Activated CD4-positive, alpha-beta memory T cell treated with anti-CD3 and anti-CD28 coated beads for 36 hours (primary cell): ENCODE measurements at regions of chr3 and their contacts with region 1.

Region 1: GRCh38 chr3:63911873-63912767 is at the start of gene SCAANT1:
- DNase-seq: peak; percentile 85
- H3K4me3 Mint-ChIP-seq: peak within 1 kb of the TSS; percentile 90
- H3K27ac Mint-ChIP-seq: peak within 1 kb of the TSS; percentile 93
- H3K4me1 Mint-ChIP-seq: peaks cover 41% of the 10 kb centered on the region
- H3K27me3 Mint-ChIP-seq: no peaks in the 10 kb centered on the region
- total RNA-seq, gene SCAANT1: not detected

Region 2: GRCh38 chr3:63863148-63864007 is 48.7 kb before region 1 on chr3 and contains the starts of genes ATXN7 and THOC7:
- CTCF ChIA-PET with region 1: interaction called, 3 read pairs
- POLR2A ChIA-PET with region 1: interaction called, 10 read pairs
- intact Hi-C with region 1: loop called (anchors 1 kb)
- DNase-seq: peak; percentile 70
- H3K4me3 Mint-ChIP-seq: peak within 1 kb of the TSS; percentile 92
- H3K27ac Mint-ChIP-seq: peak within 1 kb of the TSS; percentile 93
- H3K4me1 Mint-ChIP-seq: peaks cover 43% of the 10 kb centered on the region
- H3K27me3 Mint-ChIP-seq: no peaks in the 10 kb centered on the region
- total RNA-seq, gene ATXN7: 26.3 to 29.4 TPM
- total RNA-seq, gene THOC7: 85.2 to 88.9 TPM

Region 3: GRCh38 chr3:63900459-63900858 is 11.7 kb before region 1 on chr3:
- CTCF ChIA-PET with region 1: interaction called, 4 read pairs
- POLR2A ChIA-PET with region 1: interaction called, 4 read pairs
- intact Hi-C with region 1: loop called (anchors 1 kb)
- DNase-seq: no peak
- H3K4me3 Mint-ChIP-seq: no peak overlapping the region
- H3K27ac Mint-ChIP-seq: peak overlapping the region; percentile 2
- H3K4me1 Mint-ChIP-seq: peaks cover 38% of the 10 kb centered on the region
- H3K27me3 Mint-ChIP-seq: no peaks in the 10 kb centered on the region

Region 4: GRCh38 chr3:63933459-63933858 is 21.3 kb after region 1 on chr3:
- CTCF ChIA-PET with region 1: no interaction called
- POLR2A ChIA-PET with region 1: no interaction called
- intact Hi-C with region 1: loop called (anchors 2 kb)
- DNase-seq: no peak
- H3K4me3 Mint-ChIP-seq: no peak overlapping the region
- H3K27ac Mint-ChIP-seq: peak overlapping the region; percentile 71
- H3K4me1 Mint-ChIP-seq: peaks cover 76% of the 10 kb centered on the region
- H3K27me3 Mint-ChIP-seq: no peaks in the 10 kb centered on the region

Region 5: DNA sequence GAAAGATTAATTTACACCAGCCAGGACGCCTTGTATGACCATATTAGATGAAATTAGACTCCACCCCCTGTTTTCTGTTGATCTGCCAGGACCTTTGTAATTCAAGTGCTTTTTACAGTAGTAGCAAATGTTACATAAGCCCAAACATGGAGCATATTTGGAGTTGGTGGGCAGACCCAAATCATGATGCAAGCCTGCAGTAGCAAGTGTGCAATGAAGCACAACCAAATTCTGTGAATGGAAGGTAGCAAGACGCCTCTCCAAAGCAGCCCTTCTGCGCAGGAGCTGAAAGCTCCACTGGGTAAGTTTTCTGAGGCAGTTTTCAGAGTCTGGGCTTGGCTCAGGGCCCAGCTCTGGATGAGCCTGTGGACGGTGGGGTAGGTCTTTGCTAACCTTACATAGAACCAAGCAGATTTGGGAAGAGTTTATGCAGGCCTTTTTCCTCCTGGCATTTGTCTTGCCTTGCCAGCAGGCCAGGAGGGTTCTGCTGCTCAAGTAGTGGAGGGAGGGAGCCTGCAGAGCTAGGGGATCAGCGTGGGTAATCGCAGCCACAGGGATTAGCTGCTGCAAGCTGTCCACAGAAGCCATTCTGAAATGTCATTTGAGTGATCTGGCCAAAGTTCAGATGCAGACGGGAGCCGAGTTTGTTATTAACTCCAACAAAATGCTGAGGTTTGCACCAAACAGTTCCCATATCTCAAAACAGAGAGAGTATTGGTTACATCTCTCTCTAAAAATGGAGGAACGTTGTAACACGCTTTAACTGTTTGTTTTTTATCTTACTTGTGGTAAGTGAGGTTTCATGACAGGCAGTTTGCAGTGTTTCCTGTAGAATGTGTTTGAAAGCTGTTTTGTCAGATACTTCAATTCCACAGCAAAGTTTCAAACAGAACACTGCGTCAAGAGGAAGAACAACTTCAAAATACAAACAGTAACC is 55.8 kb after region 1 on chr3:
- CTCF ChIA-PET with region 1: interaction called, 3 read pairs
- POLR2A ChIA-PET with region 1: no interaction called
- intact Hi-C with region 1: loop called (anchors 1 kb)
- DNase-seq: peak; percentile 45
- H3K4me3 Mint-ChIP-seq: peak overlapping the region; percentile 71
- H3K27ac Mint-ChIP-seq: peak overlapping the region; percentile 90
- H3K4me1 Mint-ChIP-seq: peaks cover 88% of the 10 kb centered on the region
- H3K27me3 Mint-ChIP-seq: no peaks in the 10 kb centered on the region

Region 6: DNA sequence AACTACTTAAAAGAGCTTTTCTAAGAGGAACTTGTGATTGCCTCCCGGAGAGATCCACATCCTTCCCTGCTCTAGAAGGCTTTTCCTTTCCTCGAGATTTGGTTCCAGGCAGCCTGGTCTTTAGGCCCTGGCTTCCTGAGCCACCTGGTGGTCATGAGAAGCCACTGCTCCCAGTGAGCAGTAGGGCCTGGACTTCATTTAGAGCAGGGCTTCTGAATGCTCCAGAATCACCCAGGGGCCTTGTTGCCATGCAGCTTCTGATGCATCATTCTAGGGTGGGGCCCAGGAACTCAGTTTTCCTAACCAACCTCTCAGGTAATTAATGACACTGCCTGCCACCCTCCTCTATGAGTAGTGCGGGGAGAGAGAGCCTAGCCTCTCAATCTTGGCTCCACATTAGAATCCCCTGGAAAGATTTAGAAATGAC is 81.5 kb after region 1 on chr3:
- CTCF ChIA-PET with region 1: interaction called, 4 read pairs
- POLR2A ChIA-PET with region 1: no interaction called
- intact Hi-C with region 1: loop called (anchors 5 kb)
- DNase-seq: peak; percentile 61
- H3K4me3 Mint-ChIP-seq: no peak overlapping the region
- H3K27ac Mint-ChIP-seq: peak overlapping the region; percentile 65
- H3K4me1 Mint-ChIP-seq: peaks cover 30% of the 10 kb centered on the region
- H3K27me3 Mint-ChIP-seq: no peaks in the 10 kb centered on the region

Region 7: GRCh38 chr3:64023187-64023848 is 111.2 kb after region 1 on chr3 and contains the start of gene PSMD6:
- CTCF ChIA-PET with region 1: interaction called, 4 read pairs
- POLR2A ChIA-PET with region 1: interaction called, 3 read pairs
- intact Hi-C with region 1: loop called (anchors 2 kb)
- DNase-seq: peak; percentile 95
- H3K4me3 Mint-ChIP-seq: peak within 1 kb of the TSS; percentile 85
- H3K27ac Mint-ChIP-seq: peak within 1 kb of the TSS; percentile 76
- H3K4me1 Mint-ChIP-seq: peaks cover 27% of the 10 kb centered on the region
- H3K27me3 Mint-ChIP-seq: peaks cover 5% of the 10 kb centered on the region
- total RNA-seq, gene PSMD6: 104 to 109 TPM